Ascending aorta (tissue), 2 donors: ENCODE measurements at regions of chr2 and their contacts with region 1.

Region 1: DNA sequence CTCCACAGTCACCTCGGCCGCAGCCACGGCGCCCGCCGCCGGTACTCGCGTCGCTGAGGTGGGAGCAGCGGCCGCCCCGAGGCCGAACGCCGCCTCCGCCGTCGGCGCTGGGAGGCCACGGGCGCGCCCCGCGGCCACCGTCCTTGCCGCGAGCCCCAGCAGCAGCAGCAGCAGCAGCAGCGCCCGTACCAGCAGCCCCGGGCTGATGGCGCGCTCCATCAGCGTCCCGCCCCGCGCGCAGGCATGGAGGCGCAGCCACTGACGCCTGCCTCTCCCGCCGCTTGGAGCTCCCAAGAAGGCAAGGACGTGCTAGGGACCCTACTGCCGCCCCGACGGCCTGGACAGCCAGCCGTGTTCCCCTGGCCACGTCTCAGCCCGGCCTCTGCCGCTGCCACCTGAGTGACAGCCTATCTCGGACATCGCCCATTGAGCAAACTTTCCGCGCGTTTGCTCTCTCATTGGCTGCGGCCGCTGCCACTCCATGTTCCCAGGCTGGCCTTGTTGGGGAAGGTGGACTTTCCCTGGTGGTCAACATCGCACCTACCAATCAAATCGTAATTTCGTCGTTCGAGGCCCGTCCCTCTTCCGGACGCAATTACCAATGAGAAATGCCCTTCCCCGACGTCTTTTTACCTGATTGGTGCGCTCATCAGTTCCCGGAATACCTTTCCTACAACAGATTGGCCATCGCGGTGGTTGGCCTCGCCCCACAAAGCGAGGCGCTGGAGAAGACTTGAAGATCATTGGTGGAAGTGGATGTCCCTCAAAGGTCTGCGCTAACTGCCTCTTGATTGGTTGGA is at the start of gene EIF2AK3:
- DNase-seq: peak; percentile 99
- H3K4me3 ChIP-seq: peak within 1 kb of the TSS; percentile 98 to 99
- H3K27ac ChIP-seq: peak within 1 kb of the TSS; percentile 98
- H3K4me1 ChIP-seq: peaks cover 0 to 17% of the 10 kb centered on the region in 2 donors
- H3K27me3 ChIP-seq: no peaks in the 10 kb centered on the region
- CTCF ChIP-seq: peak in 1 of 3 experiments; percentile 17
- total RNA-seq, gene EIF2AK3: 6.5 TPM

Region 2: GRCh38 chr2:88481691-88482338 is 145.4 kb before region 1 on chr2:
- intact Hi-C with region 1: no loop called
- DNase-seq: no peak
- H3K4me3 ChIP-seq: no peak overlapping the region
- H3K27ac ChIP-seq: no peak overlapping the region
- H3K4me1 ChIP-seq: no peaks in the 10 kb centered on the region
- H3K27me3 ChIP-seq: no peaks in the 10 kb centered on the region
- CTCF ChIP-seq: no peak

Region 3: GRCh38 chr2:88590998-88591613 is 36.1 kb before region 1 on chr2:
- intact Hi-C with region 1: loop called (anchors 2 kb)
- DNase-seq: peak in 1 of 2 donors; percentile 67
- H3K4me3 ChIP-seq: no peak overlapping the region
- H3K27ac ChIP-seq: no peak overlapping the region
- H3K4me1 ChIP-seq: no peaks in the 10 kb centered on the region
- H3K27me3 ChIP-seq: no peaks in the 10 kb centered on the region
- CTCF ChIP-seq: peak; percentile 63 to 77 (median 69)

Region 4: GRCh38 chr2:88600038-88600465 is 27.2 kb before region 1 on chr2:
- intact Hi-C with region 1: loop called (anchors 2 kb)
- DNase-seq: peak; percentile 13 to 68
- H3K4me3 ChIP-seq: peak overlapping the region in 1 of 2 donors; percentile 21
- H3K27ac ChIP-seq: peak overlapping the region; percentile 10 to 58
- H3K4me1 ChIP-seq: peaks cover 4 to 22% of the 10 kb centered on the region in 2 donors
- H3K27me3 ChIP-seq: no peaks in the 10 kb centered on the region
- CTCF ChIP-seq: no peak

Region 5: GRCh38 chr2:88669371-88670214 is 42.3 kb after region 1 on chr2:
- intact Hi-C with region 1: loop called (anchors 2 kb)
- DNase-seq: no peak
- H3K4me3 ChIP-seq: no peak overlapping the region
- H3K27ac ChIP-seq: no peak overlapping the region
- H3K4me1 ChIP-seq: no peaks in the 10 kb centered on the region
- H3K27me3 ChIP-seq: no peaks in the 10 kb centered on the region
- CTCF ChIP-seq: peak; percentile 8 to 58 (median 45)

Region 6: DNA sequence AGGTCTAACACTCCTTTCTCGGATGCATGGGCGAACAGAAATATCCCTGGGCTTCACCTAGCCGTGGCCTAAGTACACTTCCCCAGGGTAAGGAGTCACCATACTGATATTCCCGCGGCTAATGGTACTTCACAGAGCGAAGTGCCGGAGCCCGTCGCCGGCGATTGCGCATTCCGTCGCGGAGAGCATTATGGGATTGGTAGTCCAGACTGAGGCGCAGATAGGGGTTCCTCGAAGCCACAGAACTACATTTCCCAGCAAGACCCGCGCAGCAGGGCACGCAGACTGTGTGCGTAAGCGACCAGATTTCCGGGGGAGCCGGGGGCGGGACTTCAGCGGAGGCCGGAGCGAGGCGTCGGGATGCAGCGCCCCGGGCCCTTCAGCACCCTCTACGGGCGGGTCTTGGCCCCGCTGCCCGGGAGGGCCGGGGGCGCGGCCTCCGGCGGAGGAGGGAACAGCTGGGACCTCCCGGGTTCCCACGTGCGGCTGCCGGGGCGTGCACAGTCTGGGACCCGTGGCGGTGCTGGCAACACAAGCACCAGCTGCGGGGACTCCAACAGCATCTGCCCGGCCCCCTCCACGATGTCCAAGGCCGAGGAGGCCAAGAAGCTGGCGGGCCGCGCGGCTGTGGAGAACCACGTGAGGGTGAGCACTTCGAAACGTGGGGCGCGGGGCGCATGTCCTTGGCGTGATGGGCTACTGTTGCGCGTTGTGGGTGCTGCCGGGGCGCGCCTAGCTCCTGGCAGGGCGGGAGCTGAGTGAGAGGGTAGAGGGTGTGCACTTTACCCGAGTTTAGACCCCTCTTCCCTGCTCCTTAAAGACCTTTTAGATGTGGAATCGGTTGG is 64.3 kb after region 1 on chr2 and contains the start of gene RPIA:
- intact Hi-C with region 1: loop called (anchors 1 kb)
- DNase-seq: peak; percentile 93 to 99
- H3K4me3 ChIP-seq: peak within 1 kb of the TSS; percentile 73 to 76
- H3K27ac ChIP-seq: peak within 1 kb of the TSS; percentile 66 to 71
- H3K4me1 ChIP-seq: peaks cover 0 to 6% of the 10 kb centered on the region in 2 donors
- H3K27me3 ChIP-seq: no peaks in the 10 kb centered on the region
- CTCF ChIP-seq: peak; percentile 44 to 69 (median 64)
- total RNA-seq, gene RPIA: 4.4 TPM